CD8-positive, alpha-beta T cell (primary cell): ENCODE measurements at regions of chr16 and their contacts with region 1.

Region 1: GRCh38 chr16:68085259-68086071 is at the start of gene NFATC3:
- DNase-seq: peak; percentile 98 to 100 (median 99)
- ATAC-seq: peak; percentile 81
- H3K4me3 ChIP-seq: peak within 1 kb of the TSS; percentile 87 to 97
- H3K4me3 Mint-ChIP-seq: peak within 1 kb of the TSS; percentile 85
- H3K27ac ChIP-seq: peak within 1 kb of the TSS; percentile 72 to 91
- H3K27ac Mint-ChIP-seq: peak within 1 kb of the TSS; percentile 98
- H3K4me1 ChIP-seq: peaks cover 64% of the 10 kb centered on the region
- H3K4me1 Mint-ChIP-seq: peaks cover 64% of the 10 kb centered on the region
- H3K27me3 ChIP-seq: no peaks in the 10 kb centered on the region
- H3K27me3 Mint-ChIP-seq: no peaks in the 10 kb centered on the region
- CTCF ChIP-seq: no peak
- total RNA-seq, gene NFATC3: 79.4 to 85.2 TPM

Region 2: GRCh38 chr16:67806428-67807147 is 278.9 kb before region 1 on chr16 and contains the starts of genes RANBP10 and TSNAXIP1:
- CTCF ChIA-PET with region 1: no interaction called
- POLR2A ChIA-PET with region 1: interaction called, 3 read pairs
- intact Hi-C with region 1: loop called in 1 of 2 experiments (anchors 2 kb)
- DNase-seq: peak; percentile 92 to 99 (median 94)
- ATAC-seq: peak; percentile 91
- H3K4me3 ChIP-seq: peak within 1 kb of the TSS; percentile 89 to 96
- H3K4me3 Mint-ChIP-seq: peak within 1 kb of the TSS; percentile 95
- H3K27ac ChIP-seq: peak within 1 kb of the TSS; percentile 77 to 85
- H3K27ac Mint-ChIP-seq: peak within 1 kb of the TSS; percentile 91
- H3K4me1 ChIP-seq: peaks cover 35% of the 10 kb centered on the region
- H3K4me1 Mint-ChIP-seq: peaks cover 44% of the 10 kb centered on the region
- H3K27me3 ChIP-seq: no peaks in the 10 kb centered on the region
- H3K27me3 Mint-ChIP-seq: no peaks in the 10 kb centered on the region
- CTCF ChIP-seq: no peak
- total RNA-seq, gene RANBP10: 14.6 to 14.8 TPM
- total RNA-seq, gene TSNAXIP1: 0.31 to 0.41 TPM

Region 3: DNA sequence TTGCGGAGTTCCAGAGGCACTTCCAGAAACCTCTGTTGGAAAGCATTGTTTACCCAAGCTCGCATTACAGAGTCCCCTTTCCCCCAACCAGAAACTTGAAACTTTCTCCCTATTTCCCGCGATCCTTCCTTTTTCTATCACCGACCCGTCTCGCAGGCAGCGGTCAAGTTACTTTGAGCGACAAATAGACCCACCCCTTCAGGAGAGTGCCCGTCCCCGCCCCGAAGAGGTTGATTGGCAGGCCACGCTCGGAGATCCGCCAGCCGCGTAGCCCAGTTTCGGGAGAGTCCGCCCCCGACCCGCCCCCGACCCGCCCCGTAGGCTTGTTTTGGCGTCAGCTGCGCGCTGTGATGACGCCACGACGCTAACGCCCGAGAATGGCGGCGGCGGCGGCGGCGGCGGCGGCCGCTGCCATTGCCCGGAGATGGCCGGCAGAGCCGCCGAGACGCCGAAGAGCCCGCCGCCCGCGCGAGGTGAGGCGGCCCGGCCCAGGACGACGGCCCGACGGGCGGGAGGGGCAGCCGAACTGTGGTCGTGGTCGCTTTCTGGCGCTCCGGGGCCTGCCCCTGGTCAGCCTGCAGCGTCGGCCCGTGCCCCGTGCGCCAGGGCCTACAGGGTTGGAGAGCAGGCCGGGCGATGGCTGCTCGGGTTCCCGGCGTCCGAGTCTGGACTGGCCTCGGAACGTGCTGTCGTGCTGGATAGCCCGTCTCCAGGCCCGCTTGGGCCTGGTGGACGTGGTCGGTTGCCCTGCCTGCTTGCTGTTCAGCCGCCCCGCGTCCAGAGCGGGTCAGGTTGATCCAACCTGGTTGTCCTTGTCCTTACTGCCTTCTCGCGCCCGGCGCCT is 192.3 kb before region 1 on chr16 and contains the start of gene PSKH1:
- CTCF ChIA-PET with region 1: no interaction called
- POLR2A ChIA-PET with region 1: no interaction called
- intact Hi-C with region 1: loop called in 1 of 2 experiments (anchors 2 kb)
- DNase-seq: peak; percentile 89 to 96 (median 93)
- ATAC-seq: peak; percentile 99
- H3K4me3 ChIP-seq: peak within 1 kb of the TSS; percentile 81 to 93
- H3K4me3 Mint-ChIP-seq: peak within 1 kb of the TSS; percentile 95
- H3K27ac ChIP-seq: peak within 1 kb of the TSS; percentile 90 to 93
- H3K27ac Mint-ChIP-seq: peak within 1 kb of the TSS; percentile 96
- H3K4me1 ChIP-seq: peaks cover 24% of the 10 kb centered on the region
- H3K4me1 Mint-ChIP-seq: peaks cover 40% of the 10 kb centered on the region
- H3K27me3 ChIP-seq: no peaks in the 10 kb centered on the region
- H3K27me3 Mint-ChIP-seq: no peaks in the 10 kb centered on the region
- CTCF ChIP-seq: no peak
- total RNA-seq, gene PSKH1: 13.3 to 13.4 TPM

Region 4: DNA sequence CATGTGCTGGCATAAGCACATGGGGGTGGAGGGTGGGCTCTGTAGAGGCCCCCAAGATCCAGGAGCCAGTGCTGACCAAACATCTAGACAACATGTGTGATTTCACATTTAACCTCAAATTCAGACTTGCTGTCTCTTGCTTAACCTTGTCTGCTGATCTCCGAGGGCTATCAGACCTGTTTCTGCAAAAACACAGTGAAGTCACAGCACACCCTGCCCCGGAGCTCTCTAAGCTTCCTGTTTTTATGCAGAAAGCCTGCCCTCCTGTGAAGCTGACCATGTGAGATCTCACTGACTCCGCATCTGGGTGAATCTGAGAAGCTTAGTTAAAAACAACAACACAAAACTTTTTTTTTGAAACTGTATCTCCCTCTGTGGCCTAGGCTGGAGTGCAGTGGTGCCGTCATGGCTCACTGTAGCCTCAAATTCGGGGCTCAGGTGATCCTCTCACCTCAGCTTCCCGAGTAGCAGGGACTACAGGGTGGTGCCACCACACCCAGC is 79.6 kb before region 1 on chr16:
- CTCF ChIA-PET with region 1: no interaction called
- POLR2A ChIA-PET with region 1: interaction called, 10 read pairs
- intact Hi-C with region 1: no loop called
- DNase-seq: peak; percentile 39 to 85 (median 67)
- ATAC-seq: peak; percentile 96
- H3K4me3 ChIP-seq: no peak overlapping the region
- H3K4me3 Mint-ChIP-seq: peak overlapping the region; percentile 51
- H3K27ac ChIP-seq: peak overlapping the region; percentile 75 to 85
- H3K27ac Mint-ChIP-seq: peak overlapping the region; percentile 99
- H3K4me1 ChIP-seq: peaks cover 33% of the 10 kb centered on the region
- H3K4me1 Mint-ChIP-seq: peaks cover 39% of the 10 kb centered on the region
- H3K27me3 ChIP-seq: no peaks in the 10 kb centered on the region
- H3K27me3 Mint-ChIP-seq: no peaks in the 10 kb centered on the region
- CTCF ChIP-seq: no peak

Region 5: GRCh38 chr16:68049449-68049848 is 36.0 kb before region 1 on chr16:
- CTCF ChIA-PET with region 1: interaction called, 3 read pairs
- POLR2A ChIA-PET with region 1: interaction called, 3 read pairs
- intact Hi-C with region 1: loop called in 1 of 2 experiments (anchors 1 kb)
- DNase-seq: no peak
- ATAC-seq: no peak
- H3K4me3 ChIP-seq: no peak overlapping the region
- H3K4me3 Mint-ChIP-seq: no peak overlapping the region
- H3K27ac ChIP-seq: no peak overlapping the region
- H3K27ac Mint-ChIP-seq: no peak overlapping the region
- H3K4me1 ChIP-seq: no peaks in the 10 kb centered on the region
- H3K4me1 Mint-ChIP-seq: peaks cover 4% of the 10 kb centered on the region
- H3K27me3 ChIP-seq: no peaks in the 10 kb centered on the region
- H3K27me3 Mint-ChIP-seq: no peaks in the 10 kb centered on the region
- CTCF ChIP-seq: no peak

Region 6: DNA sequence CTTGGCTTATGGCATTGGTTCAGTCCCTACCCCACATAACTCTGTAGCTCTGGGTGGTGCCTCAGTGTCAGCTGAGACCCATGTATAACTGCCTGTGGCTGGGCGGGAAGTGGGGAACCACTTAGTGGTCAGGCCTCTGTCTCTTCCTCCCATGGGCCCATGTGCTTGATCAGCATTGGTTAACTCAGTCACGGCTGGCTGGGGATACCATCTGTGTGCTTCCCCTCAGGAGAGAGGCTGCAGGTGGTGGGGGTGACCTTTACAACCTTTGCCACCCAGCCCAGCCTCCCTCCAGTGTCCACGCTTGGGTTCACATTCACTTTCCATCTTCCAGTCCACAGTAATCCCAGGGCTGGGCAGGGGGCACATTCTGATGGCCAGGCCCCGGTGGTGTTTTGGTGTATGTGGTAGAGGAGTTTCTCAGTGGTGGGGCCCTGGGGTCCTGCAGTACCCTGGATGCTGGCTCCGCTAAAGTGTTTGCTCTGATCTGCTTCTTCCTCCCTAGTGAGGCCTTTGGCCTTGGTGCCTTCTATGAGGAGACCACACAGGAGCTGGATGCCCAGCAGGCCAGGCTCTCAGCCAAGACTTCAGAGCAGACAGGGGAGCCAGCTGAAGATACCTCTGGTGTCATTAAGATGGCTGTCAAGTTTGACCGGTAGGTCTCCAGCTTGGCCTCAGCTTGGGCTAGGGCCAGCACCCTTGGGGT is 10.5 kb before region 1 on chr16:
- CTCF ChIA-PET with region 1: interaction called, 51 read pairs
- POLR2A ChIA-PET with region 1: interaction called, 86 read pairs
- intact Hi-C with region 1: loop called in 1 of 2 experiments (anchors 2 kb)
- DNase-seq: peak in 8 of 9 experiments; percentile 58 to 85 (median 77)
- ATAC-seq: peak; percentile 69
- H3K4me3 ChIP-seq: peak overlapping the region; percentile 1 to 19
- H3K4me3 Mint-ChIP-seq: peak overlapping the region; percentile 76
- H3K27ac ChIP-seq: peak overlapping the region in 1 of 2 experiments; percentile 64
- H3K27ac Mint-ChIP-seq: peak overlapping the region; percentile 92
- H3K4me1 ChIP-seq: peaks cover 92% of the 10 kb centered on the region
- H3K4me1 Mint-ChIP-seq: peaks cover 87% of the 10 kb centered on the region
- H3K27me3 ChIP-seq: no peaks in the 10 kb centered on the region
- H3K27me3 Mint-ChIP-seq: no peaks in the 10 kb centered on the region
- CTCF ChIP-seq: no peak